HepG2 (cell line): ENCODE measurements at regions of chr20 and their contacts with region 1.

Region 1: DNA sequence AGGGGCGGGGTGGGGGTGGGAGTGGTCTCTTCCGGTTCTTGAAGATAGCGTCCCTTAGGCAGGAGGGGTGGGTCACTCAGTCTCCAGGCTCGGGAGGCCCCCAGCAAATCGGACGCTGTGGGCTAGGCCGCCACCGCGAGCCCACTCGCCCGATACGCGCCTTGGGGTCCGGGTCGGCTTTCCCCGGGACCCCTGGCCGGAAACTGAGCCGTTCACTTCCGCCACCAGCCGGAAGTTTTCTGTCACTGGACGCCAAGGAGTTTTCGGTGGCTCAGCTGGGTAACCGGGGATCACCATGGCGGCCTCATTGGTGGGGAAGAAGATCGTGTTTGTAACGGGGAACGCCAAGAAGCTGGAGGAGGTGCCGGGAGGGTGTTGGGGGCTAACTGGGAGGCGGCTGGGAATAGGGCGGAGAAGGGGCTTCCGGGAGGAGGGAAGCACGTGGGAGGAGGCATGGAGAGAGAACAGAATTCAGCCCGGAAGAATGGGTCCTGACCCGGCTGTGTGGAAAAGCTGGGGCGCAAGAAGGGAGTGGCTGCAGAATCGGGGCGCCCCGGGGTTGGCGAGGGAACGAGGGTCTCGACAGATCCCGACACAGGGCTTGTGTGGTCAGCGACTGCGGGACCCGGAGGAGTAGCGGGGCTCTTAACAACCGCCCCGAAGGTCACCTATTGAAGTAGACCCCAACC is at the start of gene ITPA:
- DNase-seq: peak; percentile 75
- ATAC-seq: peak; percentile 78
- H3K4me3 ChIP-seq: peak within 1 kb of the TSS; percentile 89 to 99 (median 90)
- H3K27ac ChIP-seq: peak within 1 kb of the TSS; percentile 75
- H3K4me1 ChIP-seq: peaks cover 42% of the 10 kb centered on the region
- H3K27me3 ChIP-seq: peaks cover 0 to 6% of the 10 kb centered on the region in 2 experiments; a peak in 1 of 5 replicates
- CTCF ChIP-seq: 0 out of 2 replicates have a peak, but pooled peaks have one; percentile 12
- EP300 ChIP-seq: no peak; a peak in 1 of 4 replicates
- POLR2A ChIP-seq: peak; percentile 56 to 86
- RAD21 ChIP-seq: 0 out of 2 replicates have a peak, but pooled peaks have one; percentile 52
- total RNA-seq, gene ITPA: 101 and 103 TPM in 2 replicates

Region 2: GRCh38 chr20:2840138-2840966 is 369.0 kb before region 1 on chr20 and contains the starts of genes PCED1A and VPS16:
- CTCF ChIA-PET with region 1: no interaction called
- POLR2A ChIA-PET with region 1: no interaction called
- in situ Hi-C with region 1: no loop called
- intact Hi-C with region 1: no loop called
- DNase-seq: peak; percentile 84
- ATAC-seq: peak; percentile 99
- H3K4me3 ChIP-seq: peak within 1 kb of the TSS; percentile 71 to 97 (median 74)
- H3K27ac ChIP-seq: peak within 1 kb of the TSS; percentile 76
- H3K4me1 ChIP-seq: peaks cover 37% of the 10 kb centered on the region
- H3K27me3 ChIP-seq: no peaks in the 10 kb centered on the region; a peak in 1 of 5 replicates
- CTCF ChIP-seq: peak; percentile 18; the same call in 1 of the 2 replicates
- EP300 ChIP-seq: no peak
- POLR2A ChIP-seq: peak; percentile 89 to 93
- RAD21 ChIP-seq: peak; percentile 81
- total RNA-seq, gene PCED1A: 12.6 and 40.1 TPM in 2 replicates
- total RNA-seq, gene VPS16: 27.6 and 35.4 TPM in 2 replicates

Region 3: DNA sequence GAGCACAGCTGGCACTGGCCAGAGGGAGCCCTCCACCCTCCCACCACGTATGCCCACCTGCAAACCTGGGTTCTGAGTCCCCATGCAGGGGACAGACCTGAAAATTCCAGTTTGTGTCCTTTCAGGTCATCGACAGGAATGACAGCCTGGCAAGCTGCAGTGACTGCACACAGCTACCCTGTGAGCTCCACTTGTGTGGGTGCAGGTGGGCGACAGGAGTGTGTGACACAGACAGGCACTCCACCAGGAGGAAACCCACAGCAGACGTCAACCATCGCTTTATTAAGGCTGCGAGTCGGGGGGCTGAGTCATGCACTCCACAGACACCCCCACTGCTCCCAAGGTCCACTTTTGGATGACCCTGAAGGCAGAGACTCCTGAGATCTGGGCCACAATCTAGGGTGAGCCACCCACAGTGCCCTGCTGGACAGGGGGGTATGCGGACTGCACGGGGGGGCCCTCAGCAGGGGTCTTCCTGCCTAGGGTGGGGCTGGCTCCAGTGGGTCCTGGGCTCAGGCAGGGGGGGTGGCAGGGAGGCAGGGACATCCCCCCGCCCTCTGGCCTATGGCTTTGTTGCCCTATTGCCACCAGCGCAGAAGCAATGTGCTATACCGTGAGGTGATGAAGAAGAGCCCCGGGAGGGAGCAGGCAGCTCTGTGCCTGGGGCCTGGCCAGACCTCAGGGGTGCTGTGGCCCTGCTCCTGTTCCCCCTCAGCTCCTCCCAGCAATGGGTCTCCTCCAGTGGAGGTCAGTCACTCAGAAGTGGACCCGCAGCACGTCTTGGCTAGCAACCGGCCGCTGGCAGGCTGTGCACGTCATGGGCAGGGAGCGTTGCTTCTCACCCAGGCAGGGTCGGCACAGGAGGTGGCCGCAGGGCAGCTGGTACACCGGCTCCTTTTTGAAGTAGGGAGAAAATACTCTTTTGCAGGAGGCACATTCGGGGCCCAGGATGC is 99.8 kb before region 1 on chr20:
- CTCF ChIA-PET with region 1: no interaction called
- POLR2A ChIA-PET with region 1: no interaction called
- in situ Hi-C with region 1: no loop called
- intact Hi-C with region 1: no loop called
- DNase-seq: no peak
- ATAC-seq: no peak
- H3K4me3 ChIP-seq: no peak overlapping the region
- H3K27ac ChIP-seq: no peak overlapping the region
- H3K4me1 ChIP-seq: peaks cover 57% of the 10 kb centered on the region
- H3K27me3 ChIP-seq: no peaks in the 10 kb centered on the region
- CTCF ChIP-seq: no peak
- EP300 ChIP-seq: no peak
- POLR2A ChIP-seq: no peak
- RAD21 ChIP-seq: no peak

Region 4: DNA sequence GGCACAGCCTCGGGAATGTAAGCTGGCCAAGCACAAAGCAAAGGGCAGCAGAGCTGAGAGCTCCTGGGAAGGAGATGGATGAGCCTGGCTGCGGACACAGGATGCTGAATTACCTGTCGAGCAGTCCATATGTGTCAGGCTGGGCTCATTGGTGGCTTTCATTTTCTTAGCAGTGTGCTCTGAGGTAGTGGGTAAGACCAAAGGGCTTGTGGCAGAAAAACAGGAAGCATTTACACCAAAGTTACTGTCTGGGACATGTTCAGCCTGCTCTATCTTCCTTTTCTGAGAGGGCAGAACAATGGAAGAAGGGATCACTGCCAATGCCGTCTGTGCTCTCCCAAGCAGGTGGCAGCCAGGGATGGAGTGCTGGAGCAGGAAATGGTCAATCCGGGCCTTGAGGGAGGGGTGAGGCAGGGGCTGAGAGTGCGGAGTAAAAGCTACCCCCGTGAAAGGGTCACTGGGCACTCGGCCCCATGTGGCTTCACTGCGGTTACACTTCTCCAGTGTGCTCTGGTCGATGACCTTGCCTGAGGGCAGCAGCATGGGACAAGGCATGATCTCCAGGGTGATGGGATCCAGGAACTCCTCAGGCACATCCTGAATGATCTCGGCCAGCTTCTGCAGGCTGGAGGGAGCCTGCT is 88.0 kb before region 1 on chr20:
- CTCF ChIA-PET with region 1: no interaction called
- POLR2A ChIA-PET with region 1: interaction called, 3 read pairs
- in situ Hi-C with region 1: no loop called
- intact Hi-C with region 1: loop called (anchors 2 kb)
- DNase-seq: no peak
- ATAC-seq: no peak
- H3K4me3 ChIP-seq: no peak overlapping the region
- H3K27ac ChIP-seq: peak overlapping the region; percentile 63
- H3K4me1 ChIP-seq: peaks cover 42% of the 10 kb centered on the region
- H3K27me3 ChIP-seq: no peaks in the 10 kb centered on the region
- CTCF ChIP-seq: no peak
- EP300 ChIP-seq: no peak
- POLR2A ChIP-seq: no peak
- RAD21 ChIP-seq: no peak

Region 5: DNA sequence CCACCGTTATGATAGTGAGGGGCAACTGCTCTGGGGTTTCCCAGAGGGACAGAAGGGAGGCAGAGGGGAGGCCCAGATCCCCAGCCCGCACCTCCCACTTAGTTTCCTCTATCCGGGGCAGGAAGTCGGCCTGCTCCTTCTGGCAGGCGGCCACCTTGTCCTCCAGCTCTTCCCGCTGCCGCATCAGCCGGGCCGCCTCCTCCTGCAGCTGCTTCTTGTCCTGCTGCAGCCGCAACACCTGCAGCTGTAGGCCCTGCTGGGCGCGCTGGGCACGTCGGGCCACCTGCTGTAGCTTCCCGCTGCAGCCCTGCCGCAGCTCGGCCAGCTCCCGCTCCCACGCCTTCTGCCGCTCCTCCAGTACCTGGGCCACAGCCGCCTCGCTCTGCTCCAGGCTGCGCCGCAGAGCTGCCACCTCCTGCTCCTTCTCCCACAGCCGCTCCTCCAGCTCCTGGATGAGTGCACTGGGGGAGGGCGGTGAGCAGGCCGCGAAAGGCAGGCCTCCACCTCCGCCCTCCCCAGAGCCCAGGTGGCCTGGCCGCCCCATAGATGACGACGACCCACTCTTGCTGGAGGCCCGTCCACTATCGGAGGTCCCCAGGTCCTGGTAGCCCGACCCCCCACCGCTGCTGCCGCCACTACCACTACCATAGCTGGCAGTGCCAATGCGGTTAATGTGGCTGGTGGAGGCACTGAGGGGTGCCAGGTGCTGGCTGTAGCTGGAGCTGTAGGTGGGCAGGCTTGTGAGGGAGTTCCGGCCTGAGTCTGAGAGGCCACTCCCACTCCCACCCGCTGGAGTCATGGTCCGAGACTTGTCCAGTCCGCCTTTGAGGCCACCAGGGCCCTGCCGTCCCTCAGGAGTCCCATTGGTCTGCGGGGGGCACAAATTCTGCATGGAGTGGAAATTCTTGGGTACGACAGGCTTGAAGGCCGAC is 43.7 kb before region 1 on chr20:
- CTCF ChIA-PET with region 1: no interaction called
- POLR2A ChIA-PET with region 1: interaction called, 11 read pairs
- in situ Hi-C with region 1: no loop called
- intact Hi-C with region 1: no loop called
- DNase-seq: no peak
- ATAC-seq: no peak
- H3K4me3 ChIP-seq: no peak overlapping the region
- H3K27ac ChIP-seq: no peak overlapping the region
- H3K4me1 ChIP-seq: peaks cover 68% of the 10 kb centered on the region
- H3K27me3 ChIP-seq: no peaks in the 10 kb centered on the region
- CTCF ChIP-seq: no peak
- EP300 ChIP-seq: no peak
- POLR2A ChIP-seq: no peak
- RAD21 ChIP-seq: no peak

Region 6: DNA sequence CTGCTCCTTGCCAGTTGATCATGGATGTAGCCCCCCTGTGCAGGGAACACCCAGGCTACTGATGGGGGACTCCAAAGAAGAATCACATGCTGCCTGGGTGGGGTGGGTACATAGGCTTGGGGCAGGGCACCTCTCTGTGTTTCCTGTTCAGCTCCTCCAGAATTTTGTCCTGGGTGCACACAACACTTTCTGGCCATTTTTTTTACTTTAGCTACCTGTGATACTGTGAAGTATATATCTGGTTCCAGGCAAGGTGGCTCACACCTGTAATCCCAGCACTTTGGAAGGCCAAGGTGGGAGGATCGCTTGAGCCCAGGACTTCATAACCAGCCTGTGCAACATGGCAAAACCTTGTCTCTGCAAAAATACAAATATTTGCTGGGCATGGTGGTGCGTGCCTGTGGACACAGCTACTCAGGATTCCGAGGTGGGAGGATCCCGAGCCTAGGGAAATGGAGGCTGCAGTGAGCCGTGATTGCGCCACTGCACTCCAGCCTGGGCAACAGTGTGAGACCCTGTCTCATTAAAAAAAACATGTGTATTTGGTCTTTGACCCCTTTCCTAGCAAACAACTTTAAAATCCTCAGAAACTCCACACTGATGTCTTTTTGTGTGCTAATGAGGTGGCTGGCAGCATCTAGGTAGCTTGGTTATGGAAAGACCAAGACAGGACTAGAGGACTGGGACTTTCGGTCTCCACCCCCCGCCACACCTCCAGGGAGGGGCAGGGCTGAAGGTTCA is 15.4 kb after region 1 on chr20:
- CTCF ChIA-PET with region 1: no interaction called
- POLR2A ChIA-PET with region 1: interaction called, 149 read pairs
- in situ Hi-C with region 1: no loop called
- intact Hi-C with region 1: loop called (anchors 2 kb)
- DNase-seq: peak; percentile 83
- ATAC-seq: peak; percentile 60
- H3K4me3 ChIP-seq: 0 out of 6 replicates have a peak overlapping the region, but pooled peaks of 1 of the 3 experiments have one; percentile 19
- H3K27ac ChIP-seq: peak overlapping the region; percentile 73
- H3K4me1 ChIP-seq: peaks cover 74% of the 10 kb centered on the region
- H3K27me3 ChIP-seq: no peaks in the 10 kb centered on the region
- CTCF ChIP-seq: peak; percentile 33; the same call in 1 of the 2 replicates
- EP300 ChIP-seq: peak in 1 of 2 experiments; percentile 70; a peak in 1 of 4 replicates
- POLR2A ChIP-seq: no peak; a peak in 1 of 4 replicates
- RAD21 ChIP-seq: no peak

Region 7: DNA sequence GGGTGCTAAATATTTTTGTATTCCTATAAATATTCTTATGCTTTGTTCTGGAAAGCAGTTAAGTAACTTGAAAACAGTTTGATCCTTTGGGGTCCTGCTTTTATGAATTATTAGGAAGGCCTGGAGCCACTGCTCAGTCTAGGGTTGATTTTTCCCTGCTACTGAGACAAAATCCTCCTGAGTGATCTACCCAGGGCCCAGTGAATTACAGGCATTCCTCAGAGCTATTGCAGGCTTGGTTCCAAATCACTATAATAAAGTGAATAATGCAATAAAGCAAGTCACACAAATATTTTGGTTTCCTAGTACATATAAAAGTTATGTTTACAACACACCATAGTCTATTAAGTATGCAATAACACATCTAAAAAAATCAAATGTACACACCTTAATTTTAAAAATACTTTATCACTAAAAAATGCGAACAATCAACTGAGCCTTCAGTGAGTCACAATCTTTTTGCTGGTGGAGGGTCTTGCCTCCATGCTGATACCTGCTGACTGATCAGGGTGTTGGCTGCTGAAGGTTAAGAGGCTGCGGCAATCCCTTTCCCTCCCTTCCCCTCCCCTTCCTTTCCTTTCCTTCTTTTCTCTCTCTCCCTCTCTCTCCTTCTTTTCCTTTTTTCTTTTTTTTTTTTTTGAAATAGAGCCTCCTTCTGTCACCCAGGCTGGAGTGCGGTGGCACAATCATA is 155.1 kb after region 1 on chr20:
- CTCF ChIA-PET with region 1: no interaction called
- POLR2A ChIA-PET with region 1: no interaction called
- in situ Hi-C with region 1: no loop called
- intact Hi-C with region 1: no loop called
- DNase-seq: no peak
- ATAC-seq: no peak
- H3K4me3 ChIP-seq: no peak overlapping the region
- H3K27ac ChIP-seq: no peak overlapping the region
- H3K4me1 ChIP-seq: no peaks in the 10 kb centered on the region
- H3K27me3 ChIP-seq: no peaks in the 10 kb centered on the region
- CTCF ChIP-seq: no peak
- EP300 ChIP-seq: no peak
- POLR2A ChIP-seq: no peak
- RAD21 ChIP-seq: no peak

Region 8: DNA sequence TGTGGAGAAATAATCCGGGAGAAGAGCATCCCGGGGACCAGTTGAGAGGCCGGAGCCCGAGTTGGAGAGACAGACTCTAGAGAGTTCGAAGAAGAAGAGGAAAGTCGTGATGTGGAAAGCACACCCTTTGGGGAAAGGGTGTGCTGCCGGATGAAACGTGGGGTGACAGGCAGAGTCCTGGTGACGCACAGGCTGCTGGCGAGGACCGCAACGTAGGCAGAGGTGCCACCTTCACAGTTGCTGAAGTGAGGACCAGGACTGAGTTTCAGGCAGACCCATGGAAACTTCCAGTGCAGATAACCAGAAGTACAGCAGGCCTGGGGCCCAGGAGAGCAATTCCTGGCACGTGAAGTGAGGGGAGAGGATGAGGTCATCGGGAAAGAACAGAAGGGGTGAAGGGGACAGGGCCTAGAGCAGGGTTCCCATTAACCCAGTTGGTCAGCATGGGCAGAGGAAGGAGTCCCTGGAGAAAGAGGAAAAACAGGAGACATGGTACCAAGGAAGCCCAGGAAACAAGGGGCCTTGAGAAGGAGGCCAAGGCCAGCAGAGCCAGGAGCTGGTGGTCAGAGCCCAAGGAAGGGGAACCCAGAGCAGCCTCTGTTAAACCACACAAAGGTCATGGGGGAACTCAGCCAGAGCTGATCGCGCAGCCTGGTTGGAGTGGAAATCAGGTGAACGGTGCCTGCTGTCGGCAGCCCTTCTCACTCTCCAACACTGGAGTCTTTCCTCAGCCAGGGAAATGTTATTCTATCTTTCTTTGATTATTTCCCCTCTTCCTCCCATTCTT is 1596.5 kb after region 1 on chr20:
- CTCF ChIA-PET with region 1: no interaction called
- POLR2A ChIA-PET with region 1: no interaction called
- in situ Hi-C with region 1: no loop called
- intact Hi-C with region 1: no loop called
- DNase-seq: no peak
- ATAC-seq: no peak; the same call in 2 of the 3 replicates
- H3K4me3 ChIP-seq: no peak overlapping the region
- H3K27ac ChIP-seq: no peak overlapping the region
- H3K4me1 ChIP-seq: no peaks in the 10 kb centered on the region
- H3K27me3 ChIP-seq: peaks cover 6 to 57% of the 10 kb centered on the region in 2 experiments; a peak in 4 of 5 replicates
- CTCF ChIP-seq: no peak
- EP300 ChIP-seq: no peak
- POLR2A ChIP-seq: no peak
- RAD21 ChIP-seq: no peak